PC-3 (cell line): ENCODE measurements at regions of chr3 and their contacts with region 1.

Region 1: DNA sequence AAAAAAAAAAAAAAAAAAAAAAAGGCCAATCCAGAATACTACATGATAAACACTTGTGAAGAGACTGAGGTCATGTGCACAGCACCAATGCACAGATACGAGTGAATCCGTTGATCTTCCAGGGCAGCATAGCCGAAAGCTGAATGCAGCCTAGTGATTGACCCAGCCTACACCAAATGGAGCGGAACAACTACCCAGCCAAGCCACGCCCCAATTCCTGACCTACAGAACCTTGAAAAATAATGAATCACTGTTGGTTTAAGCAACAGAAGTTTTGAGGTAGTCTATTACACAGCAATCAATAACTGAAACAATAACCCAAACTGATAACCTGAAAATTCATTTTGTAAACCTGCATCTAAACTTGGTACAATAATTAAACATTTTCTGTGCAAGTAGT is 361.0 kb downstream of the FHIT start:
- DNase-seq: peak; percentile 45
- ATAC-seq: peak; percentile 31; the same call in 1 of the 2 replicates
- H3K4me3 ChIP-seq: no peak overlapping the region
- H3K27ac ChIP-seq: 0 out of 2 replicates have a peak overlapping the region, but pooled peaks have one; percentile 6
- H3K4me1 ChIP-seq: peaks cover 19% of the 10 kb centered on the region
- H3K27me3 ChIP-seq: no peaks in the 10 kb centered on the region
- CTCF ChIP-seq: no peak

Region 2: GRCh38 chr3:60622349-60622748 is 267.9 kb before region 1 on chr3:
- CTCF ChIA-PET with region 1: no interaction called
- POLR2A ChIA-PET with region 1: interaction called, 14 read pairs
- intact Hi-C with region 1: no loop called
- DNase-seq: no peak
- ATAC-seq: no peak
- H3K4me3 ChIP-seq: no peak overlapping the region
- H3K27ac ChIP-seq: no peak overlapping the region
- H3K4me1 ChIP-seq: no peaks in the 10 kb centered on the region
- H3K27me3 ChIP-seq: no peaks in the 10 kb centered on the region
- CTCF ChIP-seq: no peak

Region 3: DNA sequence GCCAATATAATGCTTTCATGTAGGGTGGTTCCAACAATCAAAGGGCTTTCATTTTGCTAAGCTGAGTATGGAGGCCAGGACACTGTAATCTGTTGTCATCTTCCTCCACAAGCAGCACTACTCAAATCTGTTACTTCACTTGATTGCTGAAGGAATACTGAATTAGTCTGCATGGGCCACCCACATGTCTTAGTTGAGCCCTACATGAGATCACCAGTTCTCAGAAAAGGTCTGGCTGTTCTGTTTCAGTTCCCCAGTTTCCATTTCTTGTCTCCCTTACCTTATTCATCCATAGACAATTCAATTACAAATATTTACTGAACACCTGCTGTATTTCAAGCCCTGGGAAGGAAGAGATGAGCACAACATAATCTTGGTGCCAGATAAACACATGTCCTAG is 241.8 kb after region 1 on chr3:
- CTCF ChIA-PET with region 1: no interaction called
- POLR2A ChIA-PET with region 1: no interaction called
- intact Hi-C with region 1: no loop called
- DNase-seq: no peak
- ATAC-seq: no peak
- H3K4me3 ChIP-seq: no peak overlapping the region
- H3K27ac ChIP-seq: no peak overlapping the region
- H3K4me1 ChIP-seq: no peaks in the 10 kb centered on the region
- H3K27me3 ChIP-seq: no peaks in the 10 kb centered on the region
- CTCF ChIP-seq: no peak

Region 4: DNA sequence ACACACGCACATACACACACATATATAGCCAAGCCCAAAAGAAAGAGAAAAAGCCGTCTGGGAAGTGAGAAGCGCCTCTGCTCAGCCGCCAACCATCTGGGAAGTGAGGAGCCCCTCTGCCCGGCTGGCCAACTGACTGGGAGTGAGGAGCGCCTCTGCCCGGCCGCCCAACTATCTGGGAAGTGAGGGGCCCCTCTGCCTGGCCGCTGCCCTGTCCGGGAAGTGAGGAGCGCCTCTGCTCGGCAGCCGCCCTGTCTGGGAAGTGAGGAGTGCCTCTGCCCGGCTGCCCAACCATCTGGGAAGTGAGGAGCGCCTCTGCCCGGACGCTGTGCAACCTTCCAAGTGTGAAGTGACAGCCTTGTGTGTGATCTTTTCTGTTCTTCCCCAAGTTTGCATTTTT is 311.9 kb after region 1 on chr3:
- CTCF ChIA-PET with region 1: no interaction called
- POLR2A ChIA-PET with region 1: no interaction called
- intact Hi-C with region 1: no loop called
- DNase-seq: no peak
- ATAC-seq: no peak
- H3K4me3 ChIP-seq: no peak overlapping the region
- H3K27ac ChIP-seq: no peak overlapping the region
- H3K4me1 ChIP-seq: no peaks in the 10 kb centered on the region
- H3K27me3 ChIP-seq: no peaks in the 10 kb centered on the region
- CTCF ChIP-seq: no peak

Region 5: GRCh38 chr3:61331929-61332552 is 441.8 kb after region 1 on chr3:
- CTCF ChIA-PET with region 1: no interaction called
- POLR2A ChIA-PET with region 1: no interaction called
- intact Hi-C with region 1: no loop called
- DNase-seq: no peak
- ATAC-seq: no peak
- H3K4me3 ChIP-seq: no peak overlapping the region
- H3K27ac ChIP-seq: no peak overlapping the region
- H3K4me1 ChIP-seq: no peaks in the 10 kb centered on the region
- H3K27me3 ChIP-seq: 0 out of 2 replicates have a peak, but pooled peaks cover 3% of the 10 kb centered on the region
- CTCF ChIP-seq: no peak